ENCODE measurements at regions of chr13 and their contacts with region 1.

Region 1: DNA sequence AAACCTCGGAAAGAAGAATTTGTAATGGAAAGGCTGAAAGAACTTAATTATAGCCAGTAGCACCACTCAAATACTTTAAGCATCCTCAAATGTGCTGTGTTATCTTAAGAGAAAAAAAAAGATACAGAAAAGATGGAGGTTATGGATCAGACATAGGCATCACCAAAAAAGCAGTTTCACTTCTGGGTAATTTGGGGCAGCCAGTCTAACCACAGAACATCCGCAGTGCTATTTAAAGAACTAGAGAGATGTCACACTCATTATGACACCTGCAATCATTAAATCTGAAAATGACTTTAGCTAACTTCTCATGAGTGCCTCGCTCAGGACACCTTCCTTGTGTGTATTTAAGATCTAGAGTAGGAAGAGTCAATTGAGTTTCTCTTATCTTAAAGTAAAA is 211.8 kb downstream of the RBM26 start:
- DNase-seq: peak; percentile 62
- H3K4me3 Mint-ChIP-seq: peak overlapping the region; percentile 60
- H3K27ac Mint-ChIP-seq: peak overlapping the region; percentile 22
- H3K4me1 Mint-ChIP-seq: peaks cover 56% of the 10 kb centered on the region
- H3K27me3 Mint-ChIP-seq: no peaks in the 10 kb centered on the region

Region 2: GRCh38 chr13:78022164-78022877 is 1172.0 kb before region 1 on chr13:
- intact Hi-C with region 1: loop called (anchors 5 kb)
- DNase-seq: peak; percentile 35
- H3K4me3 Mint-ChIP-seq: no peak overlapping the region
- H3K27ac Mint-ChIP-seq: peak overlapping the region; percentile 76
- H3K4me1 Mint-ChIP-seq: peaks cover 10% of the 10 kb centered on the region
- H3K27me3 Mint-ChIP-seq: peaks cover 14% of the 10 kb centered on the region

Region 3: GRCh38 chr13:78658635-78659449 is 535.4 kb before region 1 on chr13 and contains the start of gene OBI1:
- intact Hi-C with region 1: loop called (anchors 1 kb)
- DNase-seq: peak; percentile 84
- H3K4me3 Mint-ChIP-seq: peak within 1 kb of the TSS; percentile 96
- H3K27ac Mint-ChIP-seq: peak within 1 kb of the TSS; percentile 97
- H3K4me1 Mint-ChIP-seq: peaks cover 36% of the 10 kb centered on the region
- H3K27me3 Mint-ChIP-seq: no peaks in the 10 kb centered on the region
- total RNA-seq, gene OBI1: 20.0 and 21.1 TPM in 2 replicates

Region 4: GRCh38 chr13:79393564-79394249 is 199.4 kb after region 1 on chr13:
- intact Hi-C with region 1: loop called (anchors 2 kb)
- DNase-seq: no peak
- H3K4me3 Mint-ChIP-seq: peak overlapping the region; percentile 64
- H3K27ac Mint-ChIP-seq: peak overlapping the region; percentile 60
- H3K4me1 Mint-ChIP-seq: peaks cover 62% of the 10 kb centered on the region
- H3K27me3 Mint-ChIP-seq: no peaks in the 10 kb centered on the region

Measured in activated T-helper 1 cell treated with anti-CD3 and anti-CD28 coated beads, Interleukin-12 subunit alpha, Interleukin-12 subunit beta, Interleukin-2, Interleukin-4 antibody, amounts not matched to agents 30 ng/mL and 10 ng/mL and 1 ng/mL, durations not matched to agents 14 hours and 24 hours and 36 hours (primary cell).